Caco-2 (cell line): ENCODE measurements at regions of chr10 and their contacts with region 1.

Region 1: DNA sequence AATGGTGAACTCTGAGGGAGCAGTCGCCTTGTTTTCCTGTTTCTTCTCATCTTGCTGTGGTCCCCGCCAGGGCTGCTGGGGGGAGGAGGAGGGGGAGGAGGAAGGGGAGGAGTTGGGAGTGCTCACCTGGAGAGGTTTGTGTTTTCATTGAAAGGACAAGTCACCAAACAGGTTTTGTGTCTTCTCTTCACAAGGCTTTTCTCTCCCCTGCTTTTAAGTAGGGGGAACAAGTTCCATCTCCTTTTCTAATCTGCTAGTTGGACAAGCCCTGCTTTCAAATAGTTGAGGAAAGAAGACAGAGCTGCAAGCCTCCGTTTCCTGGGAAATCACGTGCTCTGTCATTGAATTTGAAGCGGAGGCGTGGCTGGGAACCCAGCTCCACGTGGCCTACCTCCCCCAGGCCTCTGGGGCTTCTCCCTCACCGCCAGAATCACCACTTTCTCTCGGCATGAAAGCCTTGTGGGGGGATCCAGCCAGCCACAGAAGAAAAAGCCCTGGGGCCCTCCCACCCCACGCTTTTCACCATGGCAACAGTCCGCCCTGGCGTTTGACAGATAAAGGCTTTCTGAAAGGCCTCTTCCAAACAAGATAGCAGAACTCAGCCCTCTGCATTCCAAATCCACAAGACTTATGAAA is 51.5 kb downstream of the PROSER2 start:
- DNase-seq: peak; percentile 95
- H3K4me3 ChIP-seq: peak overlapping the region; percentile 29
- H3K4me3 Mint-ChIP-seq: peak overlapping the region; percentile 72
- H3K27ac Mint-ChIP-seq: peak overlapping the region; percentile 97
- H3K4me1 ChIP-seq: peaks cover 59% of the 10 kb centered on the region
- H3K4me1 Mint-ChIP-seq: peaks cover 67% of the 10 kb centered on the region
- H3K27me3 ChIP-seq: no peaks in the 10 kb centered on the region
- H3K27me3 Mint-ChIP-seq: no peaks in the 10 kb centered on the region
- CTCF ChIP-seq: no peak

Region 2: DNA sequence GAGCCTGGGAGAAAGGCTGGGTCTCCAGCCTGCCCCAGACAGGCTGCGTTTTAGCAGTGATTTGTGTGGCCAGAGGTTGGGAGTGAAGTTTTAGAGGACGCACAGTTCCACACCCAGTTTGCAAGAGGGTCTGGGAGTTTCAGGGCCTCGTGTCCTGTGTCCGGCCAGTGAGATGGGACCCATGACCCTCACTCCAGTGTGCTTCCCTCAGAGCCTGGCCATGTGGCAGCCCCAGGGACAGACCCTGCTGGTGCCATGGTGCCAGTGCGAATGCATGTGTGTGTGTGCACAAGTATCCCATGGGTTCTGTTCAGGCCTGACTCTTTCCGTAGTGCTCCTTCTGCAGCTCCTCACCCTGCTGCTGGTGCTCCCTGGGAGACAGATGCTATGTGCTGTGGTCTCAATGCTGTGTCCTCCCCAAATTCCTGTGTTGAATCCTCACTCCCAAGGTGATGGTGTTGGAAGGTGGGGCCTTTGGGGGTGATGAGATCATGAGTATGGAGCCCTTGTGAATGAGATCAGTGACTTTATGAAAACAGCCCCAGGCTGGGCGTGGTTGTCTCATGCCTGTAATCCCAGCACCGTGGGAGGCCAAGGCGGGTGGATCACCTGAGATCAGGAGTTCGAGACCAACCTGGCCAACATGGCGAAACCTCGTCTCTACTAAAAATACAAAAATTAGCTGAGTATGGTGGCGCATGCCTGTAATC is 116.0 kb before region 1 on chr10:
- CTCF ChIA-PET with region 1: no interaction called
- POLR2A ChIA-PET with region 1: no interaction called
- intact Hi-C with region 1: no loop called
- DNase-seq: no peak
- H3K4me3 ChIP-seq: no peak overlapping the region
- H3K4me3 Mint-ChIP-seq: no peak overlapping the region
- H3K27ac Mint-ChIP-seq: no peak overlapping the region
- H3K4me1 ChIP-seq: peaks cover 6% of the 10 kb centered on the region
- H3K4me1 Mint-ChIP-seq: peaks cover 6% of the 10 kb centered on the region
- H3K27me3 ChIP-seq: no peaks in the 10 kb centered on the region
- H3K27me3 Mint-ChIP-seq: no peaks in the 10 kb centered on the region
- CTCF ChIP-seq: no peak

Region 3: GRCh38 chr10:11782793-11783557 is 91.7 kb before region 1 on chr10:
- CTCF ChIA-PET with region 1: interaction called, 16 read pairs
- POLR2A ChIA-PET with region 1: interaction called, 8 read pairs
- intact Hi-C with region 1: no loop called
- DNase-seq: peak in 1 of 2 experiments; percentile 84
- H3K4me3 ChIP-seq: no peak overlapping the region
- H3K4me3 Mint-ChIP-seq: peak overlapping the region; percentile 4
- H3K27ac Mint-ChIP-seq: peak overlapping the region; percentile 60
- H3K4me1 ChIP-seq: peaks cover 10% of the 10 kb centered on the region; the same call in 1 of the 2 replicates
- H3K4me1 Mint-ChIP-seq: peaks cover 8% of the 10 kb centered on the region
- H3K27me3 ChIP-seq: no peaks in the 10 kb centered on the region
- H3K27me3 Mint-ChIP-seq: no peaks in the 10 kb centered on the region
- CTCF ChIP-seq: peak; percentile 87 to 90

Region 4: GRCh38 chr10:11823122-11823988 is 51.3 kb before region 1 on chr10 and contains the start of gene PROSER2:
- CTCF ChIA-PET with region 1: interaction called, 3 read pairs
- POLR2A ChIA-PET with region 1: interaction called, 3 read pairs
- intact Hi-C with region 1: loop called (anchors 1 kb)
- DNase-seq: peak; percentile 77 to 87
- H3K4me3 ChIP-seq: peak within 1 kb of the TSS; percentile 94
- H3K4me3 Mint-ChIP-seq: peak within 1 kb of the TSS; percentile 93
- H3K27ac Mint-ChIP-seq: peak within 1 kb of the TSS; percentile 79
- H3K4me1 ChIP-seq: peaks cover 43% of the 10 kb centered on the region
- H3K4me1 Mint-ChIP-seq: peaks cover 42% of the 10 kb centered on the region
- H3K27me3 ChIP-seq: no peaks in the 10 kb centered on the region
- H3K27me3 Mint-ChIP-seq: no peaks in the 10 kb centered on the region
- CTCF ChIP-seq: no peak
- total RNA-seq, gene PROSER2: 123 and 134 TPM in 2 replicates

Region 5: GRCh38 chr10:11886851-11887250 is 12.2 kb after region 1 on chr10:
- CTCF ChIA-PET with region 1: interaction called, 3 read pairs
- POLR2A ChIA-PET with region 1: interaction called, 10 read pairs
- intact Hi-C with region 1: no loop called
- DNase-seq: no peak
- H3K4me3 ChIP-seq: no peak overlapping the region
- H3K4me3 Mint-ChIP-seq: no peak overlapping the region
- H3K27ac Mint-ChIP-seq: no peak overlapping the region
- H3K4me1 ChIP-seq: peaks cover 13% of the 10 kb centered on the region
- H3K4me1 Mint-ChIP-seq: peaks cover 9% of the 10 kb centered on the region
- H3K27me3 ChIP-seq: no peaks in the 10 kb centered on the region
- H3K27me3 Mint-ChIP-seq: no peaks in the 10 kb centered on the region
- CTCF ChIP-seq: no peak

Region 6: GRCh38 chr10:11913074-11913641 is 38.5 kb after region 1 on chr10:
- CTCF ChIA-PET with region 1: interaction called, 3 read pairs
- POLR2A ChIA-PET with region 1: interaction called, 6 read pairs
- intact Hi-C with region 1: loop called (anchors 2 kb)
- DNase-seq: peak; percentile 56 to 62
- H3K4me3 ChIP-seq: no peak overlapping the region
- H3K4me3 Mint-ChIP-seq: peak overlapping the region; percentile 47
- H3K27ac Mint-ChIP-seq: peak overlapping the region; percentile 80
- H3K4me1 ChIP-seq: peaks cover 25% of the 10 kb centered on the region
- H3K4me1 Mint-ChIP-seq: peaks cover 13% of the 10 kb centered on the region
- H3K27me3 ChIP-seq: no peaks in the 10 kb centered on the region
- H3K27me3 Mint-ChIP-seq: no peaks in the 10 kb centered on the region
- CTCF ChIP-seq: no peak

Region 7: DNA sequence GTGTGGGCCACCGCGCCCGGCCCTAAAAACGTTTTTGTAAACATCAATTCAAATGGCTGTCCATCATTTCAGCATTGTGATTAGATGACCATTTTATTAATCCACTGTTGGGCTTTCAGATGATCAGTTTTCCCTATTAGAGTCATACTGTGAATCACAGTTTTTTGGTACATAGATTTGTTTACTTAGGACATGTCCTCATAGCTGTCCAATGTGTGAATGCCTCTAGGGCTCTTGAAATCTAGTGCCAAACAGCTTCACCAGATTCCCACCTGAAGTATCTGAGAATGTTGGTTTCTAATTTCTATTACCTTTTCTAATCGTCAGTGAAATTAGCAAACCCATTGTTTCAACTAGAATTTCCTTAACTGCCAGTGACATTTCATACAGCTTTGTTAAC is 101.1 kb after region 1 on chr10:
- CTCF ChIA-PET with region 1: no interaction called
- POLR2A ChIA-PET with region 1: no interaction called
- intact Hi-C with region 1: loop called (anchors 2 kb)
- DNase-seq: no peak
- H3K4me3 ChIP-seq: no peak overlapping the region
- H3K4me3 Mint-ChIP-seq: no peak overlapping the region
- H3K27ac Mint-ChIP-seq: no peak overlapping the region
- H3K4me1 ChIP-seq: no peaks in the 10 kb centered on the region
- H3K4me1 Mint-ChIP-seq: no peaks in the 10 kb centered on the region
- H3K27me3 ChIP-seq: no peaks in the 10 kb centered on the region
- H3K27me3 Mint-ChIP-seq: no peaks in the 10 kb centered on the region
- CTCF ChIP-seq: no peak

Region 8: DNA sequence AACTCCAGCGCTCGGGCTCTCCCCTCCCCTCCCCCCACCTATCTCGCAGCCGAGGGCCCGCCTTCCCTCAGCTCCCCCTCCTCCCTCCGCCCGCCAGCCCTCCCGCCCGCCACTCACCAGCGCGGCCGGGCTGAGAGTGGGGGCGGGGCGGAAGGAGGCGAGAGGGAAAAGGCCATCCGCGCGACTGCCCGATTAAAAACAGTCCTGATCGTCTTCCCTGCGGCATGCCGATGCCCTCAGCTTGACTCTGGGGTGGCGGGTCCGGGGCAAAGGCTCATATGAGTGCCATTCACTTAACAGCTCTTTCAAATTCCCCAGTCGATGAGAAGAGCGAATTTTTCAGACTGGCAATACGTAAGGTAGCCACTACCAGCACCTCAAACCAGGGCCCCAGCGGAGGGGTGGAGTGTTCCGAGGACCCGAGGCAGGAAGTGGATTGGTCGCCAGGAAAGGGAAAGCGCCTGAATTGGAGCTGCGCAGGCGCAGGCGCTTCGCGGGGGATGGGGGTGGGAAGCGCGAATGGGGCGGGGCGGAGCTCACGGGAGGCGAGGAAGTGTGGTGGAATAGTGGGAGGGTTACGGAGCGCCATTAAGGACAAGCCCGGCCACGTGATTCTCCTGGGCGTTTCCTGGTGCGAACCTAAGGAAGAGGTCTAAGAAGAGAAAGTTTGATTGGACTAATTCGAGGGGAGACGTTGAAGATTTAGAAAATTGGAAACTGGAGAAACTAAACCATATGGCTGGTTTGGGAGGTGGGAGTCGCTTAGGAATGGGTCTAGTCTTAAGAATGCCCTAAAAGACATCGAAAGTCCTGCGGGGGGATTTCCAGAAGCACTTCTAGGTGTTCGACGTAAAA is 168.4 kb after region 1 on chr10 and contains the start of gene UPF2:
- CTCF ChIA-PET with region 1: interaction called, 3 read pairs
- POLR2A ChIA-PET with region 1: interaction called, 14 read pairs
- intact Hi-C with region 1: loop called (anchors 2 kb)
- DNase-seq: peak; percentile 100
- H3K4me3 ChIP-seq: peak within 1 kb of the TSS; percentile 94
- H3K4me3 Mint-ChIP-seq: peak within 1 kb of the TSS; percentile 80
- H3K27ac Mint-ChIP-seq: peak within 1 kb of the TSS; percentile 94
- H3K4me1 ChIP-seq: peaks cover 14% of the 10 kb centered on the region
- H3K4me1 Mint-ChIP-seq: peaks cover 18% of the 10 kb centered on the region
- H3K27me3 ChIP-seq: no peaks in the 10 kb centered on the region
- H3K27me3 Mint-ChIP-seq: peaks cover 3% of the 10 kb centered on the region
- CTCF ChIP-seq: no peak
- total RNA-seq, gene UPF2: 40.6 and 40.9 TPM in 2 replicates